ENCODE measurements at regions of chr9 and their contacts with region 1.

Region 1: GRCh38 chr9:69056191-69056815 is 20.8 kb downstream of the FXN start:
- DNase-seq: no peak
- ATAC-seq: no peak
- H3K4me3 ChIP-seq: no peak overlapping the region
- H3K27ac ChIP-seq: no peak overlapping the region
- H3K4me1 ChIP-seq: no peaks in the 10 kb centered on the region
- H3K27me3 ChIP-seq: no peaks in the 10 kb centered on the region
- CTCF ChIP-seq: no peak

Region 2: GRCh38 chr9:68999393-69000105 is 56.8 kb before region 1 on chr9:
- intact Hi-C with region 1: no loop called
- DNase-seq: peak in 4 of 6 donors; percentile 33 to 77 (median 64)
- ATAC-seq: peak; percentile 90 to 96 (median 95)
- H3K4me3 ChIP-seq: no peak overlapping the region
- H3K27ac ChIP-seq: no peak overlapping the region
- H3K4me1 ChIP-seq: peaks cover 4 to 9% (median 4%) of the 10 kb centered on the region in 3 donors
- H3K27me3 ChIP-seq: no peaks in the 10 kb centered on the region
- CTCF ChIP-seq: peak; percentile 56 to 81 (median 70)

Region 3: DNA sequence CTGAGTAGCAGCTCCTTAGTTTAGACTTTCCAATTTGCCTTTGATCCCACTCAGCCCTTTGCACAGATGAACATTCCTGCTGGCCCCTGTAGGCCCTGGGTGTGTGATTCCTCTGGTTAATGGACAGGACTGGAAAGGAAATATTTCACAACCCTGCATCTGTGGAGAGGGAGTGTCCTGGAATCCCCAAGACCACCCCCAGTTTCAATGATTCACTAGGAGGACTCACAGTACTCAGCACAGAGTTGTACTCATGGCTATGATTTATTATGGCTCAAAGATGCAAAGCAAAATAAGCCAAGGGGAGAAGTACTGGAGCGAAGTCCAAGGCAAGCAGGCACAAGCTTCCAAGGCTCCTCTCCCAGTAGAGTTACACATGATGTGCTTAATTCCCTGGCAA is 75.4 kb after region 1 on chr9:
- intact Hi-C with region 1: loop called in 1 of 3 experiments (anchors 10 kb)
- DNase-seq: no peak
- ATAC-seq: peak; percentile 64 to 78 (median 76)
- H3K4me3 ChIP-seq: no peak overlapping the region
- H3K27ac ChIP-seq: peak overlapping the region in 1 of 4 donors; percentile 39
- H3K4me1 ChIP-seq: peaks cover 5 to 13% (median 6%) of the 10 kb centered on the region in 3 donors
- H3K27me3 ChIP-seq: no peaks in the 10 kb centered on the region
- CTCF ChIP-seq: no peak

Region 4: DNA sequence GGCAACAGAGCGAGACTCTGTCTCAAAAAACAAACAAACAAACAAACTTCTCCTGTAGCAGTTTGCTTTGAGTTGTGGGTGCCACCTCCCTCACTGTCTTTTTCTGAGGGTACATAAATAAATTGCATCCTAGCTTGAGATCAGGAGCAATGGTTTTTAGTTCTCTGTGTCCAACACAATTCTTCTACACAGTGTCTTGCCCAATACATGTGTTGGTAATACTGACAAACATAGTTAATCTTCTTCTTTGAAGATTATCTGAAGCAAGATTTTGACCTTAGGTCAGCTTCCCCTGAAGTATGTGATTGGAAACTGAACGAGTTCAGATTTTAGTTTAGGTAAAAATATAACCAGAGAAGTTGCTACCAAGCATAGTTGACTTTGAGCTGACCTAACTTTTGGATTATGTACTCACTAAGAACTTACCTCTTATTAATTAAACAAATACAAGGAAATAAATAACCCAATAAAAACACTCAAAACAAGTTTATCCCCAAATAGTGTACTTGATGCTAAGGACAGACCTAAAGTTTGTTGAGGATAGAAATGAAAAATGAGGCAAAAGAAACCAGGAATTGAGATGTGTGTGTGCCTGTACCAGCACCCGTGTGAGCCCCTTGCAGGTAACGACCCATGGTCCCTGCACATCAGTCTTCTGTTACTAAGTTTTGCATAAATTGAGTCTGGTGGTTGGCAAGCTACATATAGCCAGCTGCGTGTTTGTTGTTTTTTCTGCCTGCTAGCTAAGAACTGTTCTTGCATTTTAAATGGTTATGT is 134.0 kb after region 1 on chr9:
- intact Hi-C with region 1: loop called in 2 of 3 experiments (anchors 2 to 5 kb)
- DNase-seq: no peak
- ATAC-seq: no peak
- H3K4me3 ChIP-seq: no peak overlapping the region
- H3K27ac ChIP-seq: peak overlapping the region in 2 of 4 donors; percentile 26 to 46
- H3K4me1 ChIP-seq: peaks cover 14 to 52% (median 26%) of the 10 kb centered on the region in 3 donors
- H3K27me3 ChIP-seq: no peaks in the 10 kb centered on the region
- CTCF ChIP-seq: no peak

Measured in pancreas (tissue), 10 donors.